GM12878 (cell line): ENCODE measurements at regions of chr17 and their contacts with region 1.

Region 1: GRCh38 chr17:40615295-40615988 is 32.2 kb downstream of the SMARCE1 start:
- DNase-seq: peak; percentile 93
- ATAC-seq: peak; percentile 75
- H3K4me3 ChIP-seq: peak overlapping the region; percentile 35; the same call in 1 of the 2 replicates
- H3K27ac ChIP-seq: peak overlapping the region; percentile 29
- H3K4me1 ChIP-seq: peaks cover 30% of the 10 kb centered on the region
- H3K27me3 ChIP-seq: no peaks in the 10 kb centered on the region
- CTCF ChIP-seq: peak; percentile 57 to 65 (median 60)
- EP300 ChIP-seq: peak; percentile 97 to 98
- POLR2A ChIP-seq: no peak
- RAD21 ChIP-seq: peak; percentile 68

Region 2: DNA sequence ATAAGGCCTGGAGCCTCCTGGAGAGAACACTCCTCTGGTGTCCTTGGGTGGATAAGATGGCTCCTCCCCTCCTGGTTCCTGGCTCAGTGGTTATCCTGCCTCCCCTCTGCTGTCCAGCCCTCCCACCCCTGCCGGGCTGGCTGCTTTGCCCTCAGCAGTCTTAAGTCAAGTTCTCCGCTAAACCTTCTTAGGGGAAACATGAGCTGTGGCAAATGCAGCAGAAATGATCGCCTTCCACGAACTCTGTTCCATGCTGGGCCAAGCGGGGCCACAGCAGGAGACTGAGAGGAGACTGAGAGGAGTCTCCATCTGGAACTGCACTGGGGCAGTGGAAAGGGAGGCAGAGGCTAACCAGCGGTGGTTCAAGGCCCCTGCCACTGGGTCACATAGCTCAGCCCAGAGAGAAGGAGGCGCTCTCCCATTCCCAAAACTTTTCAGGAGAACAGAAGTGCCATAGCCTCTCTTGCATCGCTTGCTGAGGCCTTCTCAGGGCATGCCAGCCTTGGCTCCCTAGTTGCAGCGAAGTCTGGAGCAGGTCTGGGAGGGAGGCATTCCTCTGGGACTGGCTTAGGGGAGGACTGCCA is 140.9 kb before region 1 on chr17:
- CTCF ChIA-PET with region 1: interaction called, 15 read pairs
- POLR2A ChIA-PET with region 1: no interaction called
- RAD21 ChIA-PET with region 1: interaction called, 10 read pairs
- SMC1A ChIA-PET with region 1: interaction called, 9 read pairs
- in situ Hi-C with region 1: no loop called
- intact Hi-C with region 1: no loop called
- DNase-seq: no peak
- ATAC-seq: no peak
- H3K4me3 ChIP-seq: no peak overlapping the region
- H3K27ac ChIP-seq: no peak overlapping the region
- H3K4me1 ChIP-seq: no peaks in the 10 kb centered on the region
- H3K27me3 ChIP-seq: no peaks in the 10 kb centered on the region
- CTCF ChIP-seq: no peak
- EP300 ChIP-seq: no peak
- POLR2A ChIP-seq: no peak
- RAD21 ChIP-seq: no peak

Region 3: GRCh38 chr17:40542558-40543411 is 72.7 kb before region 1 on chr17:
- CTCF ChIA-PET with region 1: interaction called, 193 read pairs
- POLR2A ChIA-PET with region 1: interaction called, 22 read pairs
- RAD21 ChIA-PET with region 1: interaction called, 123 read pairs
- SMC1A ChIA-PET with region 1: interaction called, 175 read pairs
- in situ Hi-C with region 1: no loop called
- intact Hi-C with region 1: no loop called
- DNase-seq: no peak
- ATAC-seq: peak; percentile 67
- H3K4me3 ChIP-seq: no peak overlapping the region
- H3K27ac ChIP-seq: peak overlapping the region; percentile 30
- H3K4me1 ChIP-seq: peaks cover 56% of the 10 kb centered on the region
- H3K27me3 ChIP-seq: no peaks in the 10 kb centered on the region; a peak in 1 of 4 replicates
- CTCF ChIP-seq: no peak
- EP300 ChIP-seq: peak; percentile 33 to 73; a peak in 3 of 4 replicates
- POLR2A ChIP-seq: peak; percentile 40; the same call in 1 of the 2 replicates
- RAD21 ChIP-seq: no peak

Region 4: GRCh38 chr17:40598663-40599467 is 16.6 kb before region 1 on chr17:
- CTCF ChIA-PET with region 1: interaction called, 108 read pairs
- POLR2A ChIA-PET with region 1: interaction called, 117 read pairs
- RAD21 ChIA-PET with region 1: interaction called, 229 read pairs
- SMC1A ChIA-PET with region 1: interaction called, 139 read pairs
- in situ Hi-C with region 1: no loop called
- intact Hi-C with region 1: loop called (anchors 1 kb)
- DNase-seq: peak; percentile 97
- ATAC-seq: peak; percentile 59
- H3K4me3 ChIP-seq: peak overlapping the region; percentile 38; the same call in 1 of the 2 replicates
- H3K27ac ChIP-seq: peak overlapping the region; percentile 91
- H3K4me1 ChIP-seq: peaks cover 73% of the 10 kb centered on the region
- H3K27me3 ChIP-seq: no peaks in the 10 kb centered on the region
- CTCF ChIP-seq: no peak
- EP300 ChIP-seq: peak; percentile 98
- POLR2A ChIP-seq: no peak
- RAD21 ChIP-seq: peak; percentile 30

Region 5: GRCh38 chr17:40791787-40792436 is 176.5 kb after region 1 on chr17:
- CTCF ChIA-PET with region 1: interaction called, 43 read pairs
- POLR2A ChIA-PET with region 1: interaction called, 3 read pairs
- RAD21 ChIA-PET with region 1: interaction called, 18 read pairs
- SMC1A ChIA-PET with region 1: interaction called, 28 read pairs
- in situ Hi-C with region 1: no loop called
- intact Hi-C with region 1: loop called (anchors 2 kb)
- DNase-seq: no peak
- ATAC-seq: peak; percentile 44; the same call in 1 of the 3 replicates
- H3K4me3 ChIP-seq: no peak overlapping the region
- H3K27ac ChIP-seq: no peak overlapping the region
- H3K4me1 ChIP-seq: no peaks in the 10 kb centered on the region
- H3K27me3 ChIP-seq: peaks cover 2 to 7% of the 10 kb centered on the region in 2 experiments; a peak in 1 of 4 replicates
- CTCF ChIP-seq: peak; percentile 44 to 61 (median 59)
- EP300 ChIP-seq: no peak
- POLR2A ChIP-seq: no peak
- RAD21 ChIP-seq: peak; percentile 52

Region 6: DNA sequence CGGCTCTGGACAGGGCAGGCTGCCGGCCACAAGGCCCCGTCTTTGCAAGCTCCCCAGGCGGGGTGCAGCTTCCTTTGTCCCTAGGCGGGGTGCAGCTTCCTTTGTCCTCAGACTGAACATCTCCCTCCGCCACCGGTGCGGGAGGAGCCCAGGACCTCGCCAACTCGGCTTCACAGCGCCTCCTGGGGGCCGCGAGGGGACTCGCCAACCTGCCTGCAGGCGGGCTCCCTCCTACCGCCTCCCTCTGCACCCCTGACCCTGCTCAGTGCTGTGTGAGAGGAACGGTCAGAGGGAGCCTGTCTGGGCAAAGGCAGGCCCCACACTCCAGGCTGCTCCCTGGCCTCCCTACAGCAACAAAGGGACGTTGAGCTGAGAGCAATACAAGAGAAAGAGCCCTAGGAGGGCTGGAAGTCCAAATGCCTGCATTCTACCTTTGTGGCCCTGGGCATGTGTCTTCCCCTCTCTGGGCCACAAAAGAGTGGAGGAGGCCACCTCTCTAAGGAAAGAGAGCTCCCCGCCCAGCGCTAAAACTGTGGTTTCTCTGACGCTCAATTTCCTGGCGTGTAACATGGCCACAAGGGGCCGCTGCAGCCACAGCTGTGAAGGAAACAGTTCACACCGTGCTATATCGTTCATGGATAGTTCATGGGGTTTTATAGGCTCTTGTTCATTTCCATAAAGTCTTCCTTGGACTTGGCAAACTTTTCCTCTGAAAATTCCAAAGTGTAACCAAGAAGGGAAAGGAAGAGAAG is 933.6 kb after region 1 on chr17:
- CTCF ChIA-PET with region 1: interaction called, 10 read pairs
- POLR2A ChIA-PET with region 1: no interaction called
- RAD21 ChIA-PET with region 1: interaction called, 6 read pairs
- SMC1A ChIA-PET with region 1: interaction called, 3 read pairs
- in situ Hi-C with region 1: no loop called
- intact Hi-C with region 1: no loop called
- DNase-seq: peak; percentile 12
- ATAC-seq: peak; percentile 95
- H3K4me3 ChIP-seq: no peak overlapping the region
- H3K27ac ChIP-seq: no peak overlapping the region
- H3K4me1 ChIP-seq: no peaks in the 10 kb centered on the region
- H3K27me3 ChIP-seq: no peaks in the 10 kb centered on the region; a peak in 2 of 4 replicates
- CTCF ChIP-seq: peak; percentile 86 to 93 (median 91)
- EP300 ChIP-seq: no peak
- POLR2A ChIP-seq: no peak
- RAD21 ChIP-seq: peak; percentile 73